ENCODE measurements at regions of chr14 and their contacts with region 1.

Region 1: DNA sequence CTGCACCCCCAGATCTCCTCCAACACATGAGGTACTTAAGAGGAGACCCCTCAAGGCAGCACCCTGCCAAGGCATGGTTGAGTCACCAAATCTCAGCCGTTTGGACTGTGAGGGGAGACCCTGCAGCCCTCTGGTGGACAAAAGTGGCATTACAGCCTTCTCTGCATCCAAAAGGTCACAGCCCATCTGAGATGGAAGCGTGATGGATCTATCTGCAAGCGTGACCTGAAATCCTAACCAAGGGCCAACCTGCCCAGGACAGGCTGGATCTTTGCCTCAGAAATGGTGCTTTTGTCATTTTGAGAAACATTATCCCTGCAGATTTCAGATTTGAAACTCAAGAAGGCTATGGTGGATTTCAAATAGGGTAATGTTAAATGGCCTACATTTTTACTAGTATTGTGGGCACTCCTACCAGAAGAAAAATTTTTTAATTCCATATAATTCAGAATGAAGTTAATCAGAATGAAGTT is 23.7 kb upstream of the DHRS4 start:
- DNase-seq: peak; percentile 75
- ATAC-seq: peak; percentile 91

Region 2: GRCh38 chr14:23588884-23589598 is 340.8 kb before region 1 on chr14:
- intact Hi-C with region 1: loop called (anchors 5 kb)
- DNase-seq: peak; percentile 91
- ATAC-seq: peak; percentile 96

Region 3: DNA sequence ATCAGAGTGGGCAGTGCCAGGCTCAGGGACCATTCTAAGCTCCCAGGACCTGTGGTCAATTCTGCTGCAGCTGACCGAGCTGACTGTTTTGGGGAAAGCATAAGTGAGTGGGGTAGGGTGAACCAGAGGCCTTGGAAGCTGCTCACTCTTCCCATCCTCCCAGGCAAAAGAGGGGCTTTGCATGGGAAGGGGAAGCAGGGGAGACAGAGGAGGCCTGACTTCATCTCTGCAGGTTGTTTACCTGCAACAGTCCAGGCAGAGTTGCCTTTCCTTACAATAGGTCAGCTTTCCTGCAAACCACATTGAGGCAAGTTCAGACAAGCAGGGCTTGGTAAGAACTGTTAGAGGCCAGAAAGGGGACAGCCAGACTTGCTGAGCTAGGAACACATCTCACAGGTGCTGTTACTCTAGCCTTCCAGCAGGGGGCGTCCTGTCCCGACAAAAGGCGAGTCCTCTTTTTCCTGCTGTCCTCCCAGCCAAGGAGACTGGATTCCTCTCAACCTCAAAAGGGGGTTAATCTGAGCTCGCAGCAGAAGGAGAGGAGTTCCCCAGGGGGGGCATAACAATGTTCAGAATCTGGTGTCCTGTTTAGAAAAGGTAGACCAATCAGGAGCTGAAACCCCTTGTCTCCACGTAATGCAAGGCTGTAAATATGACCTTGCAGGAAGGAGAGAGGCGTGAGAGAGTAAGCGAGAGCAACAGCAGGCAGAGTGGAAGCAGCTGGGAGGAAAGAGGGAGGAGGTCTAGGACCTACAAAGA is 298.0 kb before region 1 on chr14:
- intact Hi-C with region 1: loop called (anchors 10 kb)
- DNase-seq: peak; percentile 67
- ATAC-seq: peak; percentile 97